ENCODE measurements at regions of chr20 and their contacts with region 1.

Region 1: DNA sequence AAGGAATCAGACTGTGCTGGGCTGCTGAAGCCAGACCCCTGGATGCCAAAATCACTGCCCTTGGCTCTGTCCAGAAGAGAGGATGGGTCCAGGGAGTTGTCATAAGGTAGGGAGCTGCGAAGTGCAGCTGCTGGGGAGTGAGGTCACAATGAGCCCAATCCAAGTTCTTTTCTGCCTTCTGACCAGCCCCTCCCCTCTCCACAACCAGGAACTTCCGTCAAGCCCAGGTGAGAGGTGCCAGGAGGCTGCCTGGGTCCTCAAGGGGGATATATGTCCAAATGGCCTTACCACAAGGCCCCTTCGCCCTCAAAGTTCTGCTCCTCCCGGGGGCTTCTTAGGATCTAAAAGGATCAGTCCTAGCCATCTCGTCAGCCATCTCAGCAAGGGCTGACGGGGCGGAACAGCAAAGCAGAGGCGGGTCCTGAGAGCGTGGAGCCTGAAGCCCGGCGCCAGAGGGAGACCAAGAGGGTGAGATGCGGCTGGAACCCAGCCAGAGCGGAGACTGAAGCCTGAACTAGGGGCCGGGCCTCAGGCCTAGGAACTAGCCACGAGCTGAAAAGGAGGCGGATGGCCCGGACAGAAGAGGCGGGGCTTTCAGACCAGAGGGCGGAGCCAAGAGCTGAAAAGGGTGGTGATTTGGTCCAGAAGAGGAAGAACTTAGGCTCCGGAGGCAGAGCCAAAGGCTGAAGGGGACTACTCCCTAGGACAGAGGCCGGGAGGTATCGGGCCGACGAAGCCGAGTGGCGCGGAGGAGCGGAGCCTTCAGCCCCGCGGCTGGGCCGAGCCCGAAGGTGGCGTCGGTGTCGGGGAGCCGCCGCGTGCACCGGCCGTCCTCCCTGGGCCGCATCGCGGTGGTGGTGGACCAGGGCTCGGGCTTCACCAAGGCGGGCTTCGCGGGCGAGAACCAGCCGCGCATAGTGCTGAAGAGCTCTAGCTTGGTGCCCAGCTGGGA is at the start of gene ACTL10:
- DNase-seq: peak; percentile 98
- H3K4me3 ChIP-seq: peak within 1 kb of the TSS; percentile 3 to 33 (median 17)
- H3K27ac ChIP-seq: peak within 1 kb of the TSS; percentile 21
- H3K4me1 ChIP-seq: peaks cover 23% of the 10 kb centered on the region
- H3K27me3 ChIP-seq: no peaks in the 10 kb centered on the region
- CTCF ChIP-seq: peak in 1 of 2 donors; percentile 53
- POLR2A ChIP-seq: peak; percentile 87
- total RNA-seq, gene ACTL10: 0.62 and 1.4 TPM in 2 replicates

Region 2: GRCh38 chr20:32737371-32738223 is 929.0 kb before region 1 on chr20:
- CTCF ChIA-PET with region 1: no interaction called
- POLR2A ChIA-PET with region 1: no interaction called
- dilution Hi-C with region 1: no loop called
- intact Hi-C with region 1: no loop called
- DNase-seq: peak; percentile 67
- H3K4me3 ChIP-seq: no peak overlapping the region
- H3K27ac ChIP-seq: peak overlapping the region; percentile 76
- H3K4me1 ChIP-seq: peaks cover 9% of the 10 kb centered on the region
- H3K27me3 ChIP-seq: no peaks in the 10 kb centered on the region
- CTCF ChIP-seq: no peak
- POLR2A ChIP-seq: no peak

Region 3: DNA sequence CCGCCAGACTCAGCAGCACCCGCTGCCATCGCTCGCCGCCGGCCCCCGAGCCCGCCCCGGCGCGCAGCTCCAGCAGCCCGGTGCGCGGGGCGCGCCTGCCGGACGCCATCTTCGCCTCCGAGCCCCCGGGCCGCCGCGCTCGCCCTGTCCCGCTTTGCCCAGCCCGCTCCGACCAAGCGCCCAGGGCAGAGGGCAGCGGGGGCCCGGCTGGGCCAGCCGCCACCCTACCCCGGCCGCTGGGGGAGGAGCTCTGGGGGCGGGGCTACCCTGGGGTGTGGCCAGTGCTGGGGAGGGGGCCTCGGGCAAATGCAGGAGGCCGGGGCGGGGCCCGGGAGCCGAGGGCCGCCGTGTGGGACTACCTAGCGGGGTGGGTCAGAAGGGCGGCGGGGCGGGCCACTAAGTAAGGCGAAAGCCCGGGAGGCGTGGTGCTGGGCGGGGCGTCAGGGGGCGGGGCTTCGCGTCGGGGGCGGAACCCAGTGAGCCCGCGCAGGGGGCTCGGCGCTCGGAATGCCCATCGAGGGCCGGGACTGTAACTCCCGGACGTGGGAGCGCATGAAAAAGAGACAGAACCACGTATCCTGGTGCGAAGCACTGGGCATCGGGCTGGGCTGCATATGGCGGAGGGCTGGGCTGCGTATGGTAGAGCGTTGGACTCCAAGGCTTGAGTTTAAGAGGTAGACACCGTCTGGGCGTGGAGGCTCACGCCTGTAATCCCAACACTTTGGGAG is 222.9 kb before region 1 on chr20 and contains the start of gene SNTA1:
- CTCF ChIA-PET with region 1: interaction called, 14 read pairs
- POLR2A ChIA-PET with region 1: no interaction called
- dilution Hi-C with region 1: no loop called
- intact Hi-C with region 1: no loop called
- DNase-seq: peak; percentile 69
- H3K4me3 ChIP-seq: peak within 1 kb of the TSS; percentile 2 to 46 (median 37)
- H3K27ac ChIP-seq: no peak within 1 kb of the TSS
- H3K4me1 ChIP-seq: peaks cover 5% of the 10 kb centered on the region
- H3K27me3 ChIP-seq: no peaks in the 10 kb centered on the region
- CTCF ChIP-seq: no peak
- POLR2A ChIP-seq: no peak
- total RNA-seq, gene SNTA1: 5.2 and 6.1 TPM in 2 replicates

Region 4: DNA sequence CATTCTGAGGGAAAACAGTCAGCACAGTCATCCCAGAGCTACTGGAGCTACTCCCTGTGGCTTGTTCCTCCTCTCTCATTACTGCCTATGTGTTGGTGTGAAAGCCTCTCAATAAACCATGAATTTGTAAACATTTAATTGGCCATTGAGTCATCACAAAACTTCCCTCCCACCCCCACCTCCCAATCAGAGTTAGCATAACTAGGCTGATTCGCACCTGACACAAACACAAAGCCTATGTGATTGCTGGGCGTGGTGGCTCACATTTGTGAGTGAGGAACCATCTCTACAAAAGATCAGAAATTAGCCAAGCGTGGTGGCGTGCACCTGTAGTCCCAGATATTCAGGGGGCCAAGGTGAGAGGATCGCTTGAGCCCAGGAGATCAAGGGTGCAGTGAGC is 205.9 kb before region 1 on chr20:
- CTCF ChIA-PET with region 1: interaction called, 36 read pairs
- POLR2A ChIA-PET with region 1: no interaction called
- dilution Hi-C with region 1: no loop called
- intact Hi-C with region 1: loop called (anchors 2 kb)
- DNase-seq: no peak
- H3K4me3 ChIP-seq: no peak overlapping the region
- H3K27ac ChIP-seq: no peak overlapping the region
- H3K4me1 ChIP-seq: no peaks in the 10 kb centered on the region
- H3K27me3 ChIP-seq: no peaks in the 10 kb centered on the region
- CTCF ChIP-seq: no peak
- POLR2A ChIP-seq: no peak

Region 5: GRCh38 chr20:33679758-33680485 is 13.4 kb after region 1 on chr20:
- CTCF ChIA-PET with region 1: interaction called, 13 read pairs
- POLR2A ChIA-PET with region 1: no interaction called
- dilution Hi-C with region 1: no loop called
- intact Hi-C with region 1: no loop called
- DNase-seq: no peak
- H3K4me3 ChIP-seq: no peak overlapping the region
- H3K27ac ChIP-seq: no peak overlapping the region
- H3K4me1 ChIP-seq: peaks cover 14% of the 10 kb centered on the region
- H3K27me3 ChIP-seq: no peaks in the 10 kb centered on the region
- CTCF ChIP-seq: no peak
- POLR2A ChIP-seq: no peak

Region 6: DNA sequence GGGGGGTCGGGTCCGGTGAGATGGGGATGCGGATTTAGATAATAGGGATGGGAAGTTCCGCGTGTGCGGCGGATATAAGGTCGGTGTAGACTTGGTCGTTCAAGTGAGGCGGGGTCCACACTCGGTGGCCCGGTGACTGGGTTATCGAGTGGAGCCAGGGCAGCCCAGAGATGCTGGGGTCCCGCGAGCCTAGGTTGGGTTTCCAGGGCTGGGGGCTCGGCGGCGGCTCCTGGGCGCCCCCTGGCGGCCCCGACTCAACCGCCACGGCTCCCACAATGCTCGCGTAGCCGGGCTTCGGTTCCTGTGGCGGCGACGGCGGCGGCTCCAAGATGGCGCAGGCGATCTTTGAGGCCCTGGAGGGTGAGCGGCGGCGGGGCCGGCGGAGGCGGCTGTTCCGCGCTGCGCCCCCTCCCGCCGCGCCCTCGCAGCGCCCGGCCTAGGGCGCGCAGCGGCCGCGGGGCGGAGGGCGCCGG is 65.2 kb after region 1 on chr20 and contains the start of gene ZNF341:
- CTCF ChIA-PET with region 1: interaction called, 21 read pairs
- POLR2A ChIA-PET with region 1: no interaction called
- dilution Hi-C with region 1: no loop called
- intact Hi-C with region 1: no loop called
- DNase-seq: peak; percentile 74
- H3K4me3 ChIP-seq: peak within 1 kb of the TSS; percentile 17 to 59 (median 51)
- H3K27ac ChIP-seq: peak within 1 kb of the TSS; percentile 53
- H3K4me1 ChIP-seq: peaks cover 22% of the 10 kb centered on the region
- H3K27me3 ChIP-seq: no peaks in the 10 kb centered on the region
- CTCF ChIP-seq: peak; percentile 89 to 96
- POLR2A ChIP-seq: peak; percentile 22
- total RNA-seq, gene ZNF341: 3.9 and 4.9 TPM in 2 replicates

Region 7: GRCh38 chr20:34069341-34070078 is 402.9 kb after region 1 on chr20:
- CTCF ChIA-PET with region 1: interaction called, 3 read pairs
- POLR2A ChIA-PET with region 1: no interaction called
- dilution Hi-C with region 1: no loop called
- intact Hi-C with region 1: loop called (anchors 5 kb)
- DNase-seq: peak; percentile 90
- H3K4me3 ChIP-seq: no peak overlapping the region
- H3K27ac ChIP-seq: no peak overlapping the region
- H3K4me1 ChIP-seq: no peaks in the 10 kb centered on the region
- H3K27me3 ChIP-seq: no peaks in the 10 kb centered on the region
- CTCF ChIP-seq: peak; percentile 64 to 93
- POLR2A ChIP-seq: no peak

Measured in endothelial cell of umbilical vein (primary cell).